Motor neuron (in vitro differentiated cells): ENCODE measurements at regions of chr1 and their contacts with region 1.

Region 1: GRCh38 chr1:164155347-164155746 is 403.6 kb upstream of the PBX1 start:
- ATAC-seq: peak; percentile 65 to 98 (median 83)
- H3K4me3 ChIP-seq: no peak overlapping the region
- H3K27ac ChIP-seq: peak overlapping the region in 1 of 2 donors; percentile 44
- H3K4me1 ChIP-seq: peaks cover 8 to 11% of the 10 kb centered on the region in 2 donors

Region 2: GRCh38 chr1:163999131-163999530 is 156.2 kb before region 1 on chr1:
- in situ Hi-C with region 1: no loop called
- ATAC-seq: peak in 3 of 8 experiments; percentile 40 to 49 (median 45)
- H3K4me3 ChIP-seq: no peak overlapping the region
- H3K27ac ChIP-seq: no peak overlapping the region
- H3K4me1 ChIP-seq: peaks cover 0 to 10% of the 10 kb centered on the region in 2 donors

Region 3: DNA sequence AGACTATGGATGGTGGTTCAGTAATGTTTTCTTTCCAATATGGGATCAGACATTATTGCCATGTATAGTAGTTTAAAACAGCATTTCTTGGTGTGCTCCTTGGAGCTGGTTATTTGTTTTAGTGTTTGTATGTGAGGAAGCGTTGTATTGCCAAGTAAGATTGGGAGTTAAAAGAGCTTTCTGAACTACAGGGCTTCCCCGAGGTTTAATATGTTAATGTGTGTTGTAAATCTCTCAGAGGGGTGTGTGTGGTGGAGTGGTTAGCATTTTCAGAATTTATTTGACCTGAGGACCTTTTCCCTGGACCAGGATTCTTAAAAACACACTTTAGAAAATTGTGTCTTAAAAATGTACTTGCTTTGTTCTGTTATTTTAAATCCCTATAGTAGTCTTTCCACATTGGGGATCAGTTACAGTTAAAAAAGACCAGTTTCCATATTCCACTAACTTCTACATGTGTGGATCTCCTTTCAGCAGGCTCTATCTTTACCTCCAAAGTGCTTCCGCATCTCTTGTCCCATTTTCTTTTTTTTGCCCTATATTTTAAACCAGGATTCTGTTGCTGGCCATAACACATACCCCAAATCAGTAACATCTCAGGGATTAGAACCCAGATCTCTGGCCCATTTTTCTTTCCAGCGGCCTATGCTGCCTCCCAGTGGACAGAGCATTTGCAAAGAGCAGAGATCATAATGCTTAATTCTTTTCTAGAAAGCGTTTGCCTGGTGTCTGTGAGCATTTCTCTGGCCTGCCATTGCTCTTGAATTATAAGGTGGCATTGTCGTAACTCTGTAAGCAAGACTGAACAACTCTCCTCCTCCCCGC is 462.2 kb after region 1 on chr1:
- in situ Hi-C with region 1: loop called in 1 of 9 experiments (anchors 25 kb)
- ATAC-seq: peak in 6 of 8 experiments; percentile 8 to 74 (median 50)
- H3K4me3 ChIP-seq: no peak overlapping the region
- H3K27ac ChIP-seq: peak overlapping the region; percentile 1 to 10
- H3K4me1 ChIP-seq: peaks cover 59 to 86% of the 10 kb centered on the region in 2 donors